Vagina (tissue), 2 donors: ENCODE measurements at regions of chr6 and their contacts with region 1.

Region 1: DNA sequence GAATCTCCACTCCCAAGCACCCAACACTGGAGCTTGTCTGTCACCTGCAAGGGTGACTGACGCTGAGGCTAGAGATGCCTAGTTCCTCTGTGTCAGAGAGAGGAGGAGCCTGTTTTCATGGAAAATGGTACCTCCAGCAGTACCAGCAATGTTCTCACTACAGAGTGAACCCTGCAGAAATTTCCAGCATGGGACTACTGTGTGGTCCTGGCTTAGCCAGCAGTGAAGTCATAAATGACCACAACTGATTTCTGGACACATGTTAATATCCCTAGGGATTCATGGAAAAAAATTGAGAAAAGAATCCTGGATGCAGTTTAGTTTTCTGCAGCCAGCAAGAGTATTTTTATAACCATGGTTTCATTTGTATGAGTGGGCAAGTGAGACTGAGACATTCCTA is 468.1 kb downstream of the CD83 start:
- DNase-seq: no peak
- H3K4me3 ChIP-seq: no peak overlapping the region
- H3K27ac ChIP-seq: no peak overlapping the region
- H3K4me1 ChIP-seq: no peaks in the 10 kb centered on the region
- H3K27me3 ChIP-seq: no peaks in the 10 kb centered on the region
- CTCF ChIP-seq: no peak
- POLR2A ChIP-seq: no peak

Region 2: GRCh38 chr6:14612016-14612980 is 26.6 kb after region 1 on chr6:
- intact Hi-C with region 1: loop called (anchors 1 kb)
- DNase-seq: peak in 1 of 2 donors; percentile 29
- H3K4me3 ChIP-seq: no peak overlapping the region
- H3K27ac ChIP-seq: no peak overlapping the region
- H3K4me1 ChIP-seq: no peaks in the 10 kb centered on the region
- H3K27me3 ChIP-seq: no peaks in the 10 kb centered on the region
- CTCF ChIP-seq: no peak
- POLR2A ChIP-seq: no peak